CD4-positive, alpha-beta T cell (primary cell): ENCODE measurements at regions of chr15 and their contacts with region 1.

Region 1: GRCh38 chr15:74322181-74323076 is 45.0 kb downstream of the CYP11A1 start:
- DNase-seq: peak; percentile 33 to 73 (median 48)
- ATAC-seq: peak; percentile 81
- H3K4me3 ChIP-seq: no peak overlapping the region
- H3K4me3 Mint-ChIP-seq: no peak overlapping the region
- H3K27ac ChIP-seq: no peak overlapping the region
- H3K27ac Mint-ChIP-seq: no peak overlapping the region
- H3K4me1 ChIP-seq: peaks cover 4% of the 10 kb centered on the region
- H3K4me1 Mint-ChIP-seq: peaks cover 16% of the 10 kb centered on the region
- H3K27me3 ChIP-seq: no peaks in the 10 kb centered on the region
- H3K27me3 Mint-ChIP-seq: no peaks in the 10 kb centered on the region
- CTCF ChIP-seq: peak; percentile 64

Region 2: GRCh38 chr15:73950831-73951561 is 371.4 kb before region 1 on chr15:
- CTCF ChIA-PET with region 1: interaction called, 5 read pairs
- POLR2A ChIA-PET with region 1: no interaction called
- intact Hi-C with region 1: loop called (anchors 2 to 5 kb)
- DNase-seq: peak; percentile 63 to 85 (median 75)
- ATAC-seq: peak; percentile 97
- H3K4me3 ChIP-seq: no peak overlapping the region
- H3K4me3 Mint-ChIP-seq: no peak overlapping the region
- H3K27ac ChIP-seq: no peak overlapping the region
- H3K27ac Mint-ChIP-seq: peak overlapping the region; percentile 40
- H3K4me1 ChIP-seq: peaks cover 12% of the 10 kb centered on the region
- H3K4me1 Mint-ChIP-seq: peaks cover 9% of the 10 kb centered on the region
- H3K27me3 ChIP-seq: no peaks in the 10 kb centered on the region
- H3K27me3 Mint-ChIP-seq: no peaks in the 10 kb centered on the region
- CTCF ChIP-seq: peak; percentile 86

Region 3: DNA sequence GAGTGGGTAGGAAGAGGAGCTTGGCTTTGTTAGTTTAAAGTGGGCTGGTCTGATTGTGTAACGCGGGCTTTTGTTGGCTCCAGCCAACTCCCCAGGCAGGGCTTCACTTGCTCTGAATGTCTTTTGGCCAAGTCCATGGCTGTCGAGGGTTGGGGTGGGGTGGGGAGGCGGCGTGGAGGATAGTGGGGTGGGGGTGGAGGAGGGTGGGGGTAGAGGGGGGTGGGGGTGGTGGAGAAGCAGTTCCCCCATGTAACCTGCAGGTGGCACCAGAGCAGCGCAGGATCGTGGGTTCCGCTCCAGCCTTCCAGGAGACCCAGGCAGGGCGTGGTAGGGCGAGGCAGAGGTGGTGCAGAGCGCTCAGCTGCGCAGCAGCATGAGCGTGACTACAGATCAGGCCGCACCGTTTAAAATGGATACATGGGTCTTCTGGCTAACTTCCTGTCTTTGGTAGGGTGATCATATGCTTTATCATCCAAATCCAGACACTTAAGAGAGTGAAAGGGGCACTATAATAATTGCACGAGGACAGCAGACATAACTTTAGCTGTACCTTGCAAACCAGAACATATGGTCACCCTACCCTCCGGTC is 268.4 kb before region 1 on chr15:
- CTCF ChIA-PET with region 1: no interaction called
- POLR2A ChIA-PET with region 1: no interaction called
- intact Hi-C with region 1: loop called in 1 of 2 experiments (anchors 10 kb)
- DNase-seq: peak; percentile 47 to 84 (median 61)
- ATAC-seq: peak; percentile 100
- H3K4me3 ChIP-seq: no peak overlapping the region
- H3K4me3 Mint-ChIP-seq: no peak overlapping the region
- H3K27ac ChIP-seq: no peak overlapping the region
- H3K27ac Mint-ChIP-seq: no peak overlapping the region
- H3K4me1 ChIP-seq: peaks cover 4% of the 10 kb centered on the region
- H3K4me1 Mint-ChIP-seq: peaks cover 18% of the 10 kb centered on the region
- H3K27me3 ChIP-seq: no peaks in the 10 kb centered on the region
- H3K27me3 Mint-ChIP-seq: no peaks in the 10 kb centered on the region
- CTCF ChIP-seq: peak; percentile 38

Region 4: DNA sequence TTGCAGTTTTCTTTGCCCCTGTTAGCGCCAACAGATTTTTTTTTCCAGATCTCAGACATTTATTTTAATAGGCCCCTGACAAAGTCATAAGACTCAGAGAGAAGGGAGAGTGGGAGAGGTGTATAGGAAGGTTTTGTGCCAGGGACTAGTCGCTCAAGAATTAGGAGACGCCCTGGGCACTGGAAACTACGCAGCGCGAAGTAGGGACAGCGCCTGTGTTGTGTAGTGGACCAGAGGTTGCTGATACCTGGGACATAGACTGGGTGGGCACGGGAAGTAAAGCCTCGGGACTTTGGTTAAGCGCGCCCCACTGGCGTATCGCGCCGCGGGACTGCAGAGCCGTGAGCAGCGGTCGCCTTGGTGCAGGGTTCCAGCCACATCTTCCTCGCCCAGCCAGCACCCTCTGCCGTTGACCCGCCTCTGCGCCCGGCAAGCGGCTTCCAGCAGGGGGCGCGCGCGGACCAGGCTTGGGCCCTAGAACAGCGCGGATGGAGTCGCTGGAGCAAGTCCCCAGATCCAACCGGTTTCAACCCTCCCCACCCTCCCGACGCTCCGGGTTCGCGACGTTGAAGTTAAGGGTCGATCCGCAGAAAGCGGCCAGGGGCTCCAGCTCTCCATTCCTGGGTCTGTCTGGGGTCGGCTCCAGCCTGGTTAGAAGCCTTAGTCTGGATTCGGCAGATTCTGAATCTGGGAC is 195.0 kb before region 1 on chr15:
- CTCF ChIA-PET with region 1: no interaction called
- POLR2A ChIA-PET with region 1: no interaction called
- intact Hi-C with region 1: loop called (anchors 1 kb)
- DNase-seq: peak; percentile 67 to 88 (median 78)
- ATAC-seq: peak; percentile 92
- H3K4me3 ChIP-seq: peak overlapping the region; percentile 7
- H3K4me3 Mint-ChIP-seq: peak overlapping the region; percentile 48
- H3K27ac ChIP-seq: no peak overlapping the region
- H3K27ac Mint-ChIP-seq: no peak overlapping the region
- H3K4me1 ChIP-seq: peaks cover 26% of the 10 kb centered on the region
- H3K4me1 Mint-ChIP-seq: peaks cover 25% of the 10 kb centered on the region
- H3K27me3 ChIP-seq: peaks cover 59 to 64% of the 10 kb centered on the region in 2 experiments
- H3K27me3 Mint-ChIP-seq: peaks cover 95% of the 10 kb centered on the region
- CTCF ChIP-seq: peak; percentile 96

Region 5: DNA sequence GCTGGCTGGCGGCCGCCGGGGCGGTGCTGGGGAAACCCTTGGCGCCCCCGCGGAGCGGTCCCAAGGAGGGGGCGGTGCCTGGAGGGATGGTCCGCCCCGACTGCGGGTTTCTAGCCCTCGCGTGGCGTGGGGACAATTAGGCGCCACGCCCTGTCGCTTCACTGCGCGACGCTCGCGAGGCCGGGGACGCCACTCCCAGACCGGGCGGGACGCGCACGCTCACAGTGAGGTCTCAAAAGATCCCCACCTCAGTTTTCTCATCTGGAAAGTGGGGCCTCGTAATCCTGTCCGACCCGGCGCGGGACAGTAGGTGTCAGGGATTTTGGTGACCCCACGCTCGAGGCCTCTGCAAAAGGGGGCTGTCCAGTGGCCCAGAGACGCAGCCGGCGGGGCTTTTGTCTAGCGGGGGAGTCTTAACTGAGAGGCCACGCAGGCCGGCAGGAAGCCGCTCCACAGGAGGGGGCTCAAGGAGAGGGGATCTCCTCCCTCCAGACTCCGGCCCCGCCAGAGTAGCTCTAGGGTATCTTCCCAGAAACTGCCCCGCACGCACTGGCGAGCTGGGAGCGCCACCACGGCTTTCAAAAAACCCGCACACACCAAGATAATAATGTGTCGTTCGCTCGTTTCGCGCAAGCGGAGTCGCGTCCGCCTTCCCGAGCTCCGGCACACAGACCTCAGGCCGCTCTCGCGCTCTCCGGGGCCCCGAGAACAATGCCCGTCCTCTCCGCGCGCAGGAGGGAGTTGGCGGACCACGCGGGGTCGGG is 292.5 kb after region 1 on chr15:
- CTCF ChIA-PET with region 1: no interaction called
- POLR2A ChIA-PET with region 1: no interaction called
- intact Hi-C with region 1: no loop called
- DNase-seq: peak in 13 of 14 experiments; percentile 78 to 98 (median 88)
- ATAC-seq: peak; percentile 65
- H3K4me3 ChIP-seq: peak overlapping the region; percentile 82
- H3K4me3 Mint-ChIP-seq: peak overlapping the region; percentile 94
- H3K27ac ChIP-seq: peak overlapping the region; percentile 95
- H3K27ac Mint-ChIP-seq: peak overlapping the region; percentile 99
- H3K4me1 ChIP-seq: peaks cover 55% of the 10 kb centered on the region
- H3K4me1 Mint-ChIP-seq: peaks cover 36% of the 10 kb centered on the region
- H3K27me3 ChIP-seq: no peaks in the 10 kb centered on the region
- H3K27me3 Mint-ChIP-seq: no peaks in the 10 kb centered on the region
- CTCF ChIP-seq: no peak